ENCODE measurements at regions of chr1 and their contacts with region 1.

Region 1: DNA sequence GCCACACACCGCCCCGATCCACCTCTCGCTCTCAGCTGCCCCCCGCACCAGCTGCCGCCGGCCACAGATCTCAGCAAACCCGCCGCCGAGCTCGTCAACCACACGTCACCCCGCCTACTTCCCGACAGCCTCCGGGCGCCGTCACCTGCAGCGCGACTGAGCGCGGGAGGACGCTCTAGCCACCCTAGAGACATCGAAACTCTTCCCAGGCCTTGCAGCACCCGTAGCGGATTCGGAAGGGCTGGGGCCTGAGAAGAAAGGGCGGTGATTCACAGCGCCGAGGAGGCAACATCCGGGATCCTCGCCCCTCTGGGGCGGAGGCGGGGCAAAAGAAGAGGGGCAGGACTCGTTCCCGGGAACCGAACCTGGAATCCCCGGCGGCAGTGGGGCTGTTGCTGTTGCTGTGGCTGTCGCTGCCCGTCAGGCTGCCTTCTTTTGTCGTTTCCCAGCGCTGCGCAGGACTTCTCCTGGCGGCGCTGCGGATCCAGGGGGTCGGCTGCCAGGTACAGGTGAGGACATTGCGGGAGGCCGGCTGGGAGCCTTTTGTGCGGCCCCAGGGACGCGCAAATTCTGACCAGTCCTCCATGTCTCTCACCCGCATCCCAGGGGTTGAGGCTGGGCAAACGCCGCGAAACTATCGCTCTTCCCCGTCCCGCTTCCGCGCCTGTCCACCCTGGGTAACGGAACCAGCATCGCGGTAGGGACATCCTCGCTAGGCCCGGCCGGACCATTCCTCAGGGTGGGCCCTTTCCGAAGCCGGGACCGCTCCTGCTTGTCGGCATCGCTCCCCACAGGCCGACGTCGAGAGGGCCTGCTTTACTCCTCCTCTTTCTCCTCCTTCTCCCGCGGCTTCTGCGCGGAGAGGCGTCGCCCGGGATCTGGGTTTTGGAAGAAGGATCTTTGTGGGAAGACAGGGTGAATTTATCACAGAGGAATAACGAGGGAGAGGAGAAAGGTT is at the starts of genes RO60 and UCHL5:
- DNase-seq: peak; percentile 87 to 99 (median 92)
- ATAC-seq: peak; percentile 96
- H3K4me3 ChIP-seq: peak within 1 kb of the TSS; percentile 95
- H3K4me3 Mint-ChIP-seq: peak within 1 kb of the TSS; percentile 100
- H3K27ac ChIP-seq: peak within 1 kb of the TSS; percentile 83
- H3K27ac Mint-ChIP-seq: peak within 1 kb of the TSS; percentile 96
- H3K4me1 ChIP-seq: peaks cover 24% of the 10 kb centered on the region
- H3K4me1 Mint-ChIP-seq: peaks cover 78% of the 10 kb centered on the region
- H3K27me3 ChIP-seq: no peaks in the 10 kb centered on the region
- H3K27me3 Mint-ChIP-seq: no peaks in the 10 kb centered on the region
- CTCF ChIP-seq: no peak
- total RNA-seq, gene RO60: 46.1 to 46.3 TPM
- total RNA-seq, gene UCHL5: 16.4 to 19.2 TPM

Region 2: GRCh38 chr1:193069748-193070385 is 10.3 kb after region 1 on chr1:
- CTCF ChIA-PET with region 1: interaction called, 5 read pairs
- POLR2A ChIA-PET with region 1: interaction called, 11 read pairs
- intact Hi-C with region 1: no loop called
- DNase-seq: peak in 3 of 14 experiments; percentile 19 to 37 (median 24)
- ATAC-seq: peak; percentile 52
- H3K4me3 ChIP-seq: no peak overlapping the region
- H3K4me3 Mint-ChIP-seq: peak overlapping the region; percentile 32
- H3K27ac ChIP-seq: peak overlapping the region in 1 of 2 donors; percentile 19
- H3K27ac Mint-ChIP-seq: peak overlapping the region; percentile 68
- H3K4me1 ChIP-seq: peaks cover 8% of the 10 kb centered on the region
- H3K4me1 Mint-ChIP-seq: peaks cover 56% of the 10 kb centered on the region
- H3K27me3 ChIP-seq: no peaks in the 10 kb centered on the region
- H3K27me3 Mint-ChIP-seq: no peaks in the 10 kb centered on the region
- CTCF ChIP-seq: no peak

Region 3: GRCh38 chr1:193104906-193105820 is 45.6 kb after region 1 on chr1 and contains the start of gene GLRX2:
- CTCF ChIA-PET with region 1: no interaction called
- POLR2A ChIA-PET with region 1: interaction called, 12 read pairs
- intact Hi-C with region 1: loop called in 1 of 2 experiments (anchors 5 kb)
- DNase-seq: peak; percentile 28 to 81 (median 58)
- ATAC-seq: peak; percentile 95
- H3K4me3 ChIP-seq: peak within 1 kb of the TSS; percentile 91
- H3K4me3 Mint-ChIP-seq: peak within 1 kb of the TSS; percentile 96
- H3K27ac ChIP-seq: peak within 1 kb of the TSS; percentile 22 to 25
- H3K27ac Mint-ChIP-seq: peak within 1 kb of the TSS; percentile 85
- H3K4me1 ChIP-seq: peaks cover 18% of the 10 kb centered on the region
- H3K4me1 Mint-ChIP-seq: peaks cover 35% of the 10 kb centered on the region
- H3K27me3 ChIP-seq: no peaks in the 10 kb centered on the region
- H3K27me3 Mint-ChIP-seq: no peaks in the 10 kb centered on the region
- CTCF ChIP-seq: no peak
- total RNA-seq, gene GLRX2: 4.3 to 5.5 TPM

Measured in CD4-positive, alpha-beta T cell (primary cell).